Heart right ventricle (tissue), 16 donors: ENCODE measurements at regions of chr17 and their contacts with region 1.

Region 1: GRCh38 chr17:45218895-45219661 is 2.6 kb upstream of the FMNL1 start:
- DNase-seq: peak; percentile 86 to 87
- ATAC-seq: peak; percentile 55 to 87 (median 74)
- H3K4me3 ChIP-seq: no peak overlapping the region
- H3K27ac ChIP-seq: peak overlapping the region in 2 of 10 donors; percentile 6 to 34
- H3K4me1 ChIP-seq: peaks cover 2 to 40% (median 19%) of the 10 kb centered on the region in 9 donors
- H3K27me3 ChIP-seq: no peaks in the 10 kb centered on the region
- CTCF ChIP-seq: peak; percentile 90 to 97 (median 94)

Region 2: GRCh38 chr17:45115871-45116724 is 103.0 kb before region 1 on chr17:
- intact Hi-C with region 1: no loop called
- DNase-seq: no peak
- ATAC-seq: no peak
- H3K4me3 ChIP-seq: no peak overlapping the region
- H3K27ac ChIP-seq: no peak overlapping the region
- H3K4me1 ChIP-seq: peaks cover 0 to 14% (median 9%) of the 10 kb centered on the region in 9 donors
- H3K27me3 ChIP-seq: peaks cover 0 to 8% (median 0%) of the 10 kb centered on the region in 7 donors
- CTCF ChIP-seq: no peak

Region 3: DNA sequence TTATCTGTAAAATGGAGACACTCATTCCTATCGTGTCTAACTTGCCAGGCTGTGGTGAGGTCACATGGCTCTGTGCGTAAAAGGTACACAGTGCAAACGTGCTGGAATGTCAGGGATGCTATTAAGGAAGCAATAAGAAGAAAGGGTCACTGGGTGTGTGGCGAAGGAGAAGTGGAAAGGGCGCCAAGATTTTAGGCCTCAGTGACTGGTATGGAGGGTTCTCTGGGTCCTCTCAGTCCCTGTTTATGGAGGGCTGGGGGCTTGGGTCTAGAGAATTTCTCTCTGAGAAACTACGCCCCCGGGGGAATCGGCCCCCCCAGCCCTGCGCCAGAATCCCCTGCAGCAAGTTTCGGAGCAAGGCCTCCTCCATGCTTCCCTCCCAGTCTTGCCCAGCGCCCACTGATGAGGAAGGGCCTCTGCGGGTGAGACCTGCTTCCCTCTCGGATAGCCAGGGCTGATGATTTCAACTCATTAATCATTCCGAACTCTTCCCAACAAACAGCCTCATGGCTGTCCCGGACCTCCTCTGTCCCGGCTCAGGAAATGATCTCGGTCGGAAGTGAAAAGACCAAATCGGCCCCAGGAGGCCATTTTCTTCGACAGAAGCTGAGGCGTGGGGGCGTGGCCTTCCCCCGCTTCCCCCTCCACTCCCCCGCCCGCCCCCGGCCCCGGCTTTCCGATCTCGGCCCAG is 72.0 kb before region 1 on chr17:
- intact Hi-C with region 1: no loop called
- DNase-seq: peak; percentile 54 to 87
- ATAC-seq: peak; percentile 2 to 29 (median 10)
- H3K4me3 ChIP-seq: peak overlapping the region; percentile 60 to 97 (median 74)
- H3K27ac ChIP-seq: peak overlapping the region; percentile 92 to 99 (median 98)
- H3K4me1 ChIP-seq: peaks cover 13 to 55% (median 52%) of the 10 kb centered on the region in 9 donors
- H3K27me3 ChIP-seq: no peaks in the 10 kb centered on the region
- CTCF ChIP-seq: no peak

Region 4: DNA sequence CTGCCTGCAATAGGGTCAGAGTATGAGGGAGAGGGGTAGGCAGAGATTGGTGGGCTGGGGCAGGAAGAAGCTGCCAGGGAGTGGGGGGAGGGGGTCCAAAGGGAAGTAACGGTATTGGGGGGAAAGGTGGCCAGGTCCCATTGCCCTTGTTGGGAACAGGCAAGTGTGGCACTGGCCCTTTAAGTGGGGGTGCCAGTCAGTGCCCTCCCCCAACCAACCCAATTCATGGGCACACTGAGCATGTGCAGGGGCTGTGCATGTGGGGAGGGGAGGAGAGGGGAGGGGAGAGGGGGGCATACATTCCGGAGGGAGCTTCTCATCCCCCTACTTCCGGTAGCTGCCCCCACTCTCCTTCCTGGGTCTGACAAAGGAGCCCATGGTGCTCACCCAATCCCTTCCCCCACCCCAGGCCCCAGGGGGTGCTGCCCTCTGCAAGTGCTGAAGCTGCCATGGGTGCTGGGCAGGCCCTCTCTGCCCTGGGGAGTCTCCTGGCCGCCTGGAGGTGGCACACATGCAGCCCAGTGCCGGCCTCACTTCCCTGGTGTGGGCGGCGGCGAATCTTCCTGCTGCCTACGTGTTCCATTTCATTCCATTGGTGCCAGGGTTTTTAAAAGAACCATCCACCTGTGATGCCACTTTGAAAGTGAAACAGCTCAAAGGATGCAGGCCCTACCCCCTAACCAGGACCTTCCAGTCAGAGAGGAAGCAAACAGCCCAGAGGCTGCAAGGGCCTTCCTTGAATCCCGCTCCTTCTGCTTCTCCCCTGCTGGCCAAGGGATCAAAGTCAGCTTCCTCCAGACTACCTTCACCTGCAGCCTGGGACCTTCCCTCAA is 46.4 kb before region 1 on chr17:
- intact Hi-C with region 1: no loop called
- DNase-seq: peak; percentile 57 to 70
- ATAC-seq: peak; percentile 79 to 91 (median 86)
- H3K4me3 ChIP-seq: peak overlapping the region in 7 of 10 donors; percentile 19 to 47 (median 36)
- H3K27ac ChIP-seq: peak overlapping the region; percentile 70 to 94 (median 84)
- H3K4me1 ChIP-seq: peaks cover 15 to 40% (median 28%) of the 10 kb centered on the region in 9 donors
- H3K27me3 ChIP-seq: no peaks in the 10 kb centered on the region
- CTCF ChIP-seq: peak in 2 of 9 donors; percentile 9 to 22

Region 5: DNA sequence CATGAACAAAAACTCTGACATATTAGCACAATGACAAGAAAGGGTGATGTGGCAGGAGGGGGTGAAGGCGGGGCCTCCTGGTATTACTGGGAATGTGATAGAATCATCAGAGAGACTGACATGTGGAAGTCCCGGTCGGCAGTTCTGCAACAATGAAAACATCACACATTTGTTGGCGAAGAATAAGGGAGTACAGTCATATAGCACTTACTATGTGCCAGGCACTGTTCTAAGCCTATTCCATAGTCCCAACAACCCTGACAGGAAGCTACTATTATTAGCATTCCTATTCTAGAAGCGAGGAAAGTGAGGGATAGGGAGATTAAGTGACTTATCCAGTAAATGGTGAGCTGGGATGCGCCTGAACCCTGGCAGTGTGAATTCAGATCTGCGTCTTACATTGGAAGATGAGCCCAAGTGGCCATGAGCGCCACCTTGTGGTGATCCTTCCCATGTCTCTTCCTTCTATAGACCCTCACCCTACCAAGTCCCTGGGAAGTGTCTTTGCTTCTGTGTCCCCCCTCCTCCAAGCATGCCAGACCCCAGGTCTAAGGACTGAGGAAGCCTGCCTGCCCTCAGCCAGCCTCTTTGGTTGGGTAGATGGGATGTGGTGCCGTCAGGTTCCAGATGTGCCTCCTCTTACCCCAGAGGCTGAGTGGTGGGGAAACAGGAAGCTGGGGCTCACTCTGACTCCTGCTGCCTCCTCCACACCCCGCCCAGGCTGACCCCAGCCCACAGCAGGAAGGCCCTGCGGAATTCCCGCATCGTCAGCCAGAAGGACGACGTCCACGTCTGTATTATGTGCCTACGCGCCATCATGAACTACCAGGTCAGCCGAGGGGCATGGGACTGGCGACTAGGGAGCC is 16.6 kb after region 1 on chr17:
- intact Hi-C with region 1: loop called in 4 of 10 experiments (anchors 1 kb)
- DNase-seq: peak; percentile 70 to 74
- ATAC-seq: peak in 7 of 8 donors; percentile 32 to 64 (median 49)
- H3K4me3 ChIP-seq: no peak overlapping the region
- H3K27ac ChIP-seq: peak overlapping the region in 1 of 10 donors; percentile 52
- H3K4me1 ChIP-seq: peaks cover 0 to 39% (median 11%) of the 10 kb centered on the region in 9 donors
- H3K27me3 ChIP-seq: no peaks in the 10 kb centered on the region
- CTCF ChIP-seq: peak; percentile 60 to 88 (median 79)

Region 6: GRCh38 chr17:45270828-45271418 is 51.8 kb after region 1 on chr17:
- intact Hi-C with region 1: loop called in 6 of 10 experiments (anchors 5 to 10 kb)
- DNase-seq: no peak
- ATAC-seq: peak in 3 of 8 donors; percentile 24 to 38 (median 29)
- H3K4me3 ChIP-seq: no peak overlapping the region
- H3K27ac ChIP-seq: no peak overlapping the region
- H3K4me1 ChIP-seq: peaks cover 0 to 15% (median under 1%) of the 10 kb centered on the region in 9 donors
- H3K27me3 ChIP-seq: no peaks in the 10 kb centered on the region
- CTCF ChIP-seq: peak; percentile 20 to 66 (median 52)

Region 7: DNA sequence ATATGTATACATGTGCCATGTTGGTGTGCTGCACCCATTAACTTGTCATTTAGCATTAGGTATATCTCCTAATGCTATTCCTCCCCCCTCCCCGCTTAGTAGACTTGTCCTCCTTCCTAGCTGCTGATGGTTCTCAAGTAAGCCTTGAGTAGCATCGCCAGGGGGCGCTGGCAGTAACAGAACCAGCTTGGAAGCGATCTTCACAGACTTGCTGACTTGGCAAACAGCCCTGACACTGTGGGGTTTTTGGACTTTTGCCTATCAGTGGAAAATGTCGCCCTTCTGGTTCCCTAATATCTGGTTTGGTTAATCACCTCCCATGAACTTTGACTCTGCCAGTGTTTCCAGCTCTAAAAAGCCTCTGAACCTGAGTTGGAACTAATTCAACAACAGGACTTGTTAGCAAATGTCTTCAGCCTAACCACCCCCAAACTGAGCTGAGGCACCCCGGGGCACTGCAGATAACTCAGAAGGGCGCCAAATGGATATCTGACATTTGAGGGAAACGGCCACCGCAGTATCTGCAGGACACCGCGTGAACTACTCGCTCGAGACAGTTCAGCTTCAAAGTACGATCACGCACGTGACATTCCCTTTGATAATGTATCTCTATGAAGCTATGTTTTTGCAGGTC is 58.3 kb after region 1 on chr17:
- intact Hi-C with region 1: loop called in 6 of 10 experiments (anchors 5 to 10 kb)
- DNase-seq: peak; percentile 94
- ATAC-seq: peak; percentile 58 to 85 (median 74)
- H3K4me3 ChIP-seq: peak overlapping the region in 2 of 10 donors; percentile 2 to 5
- H3K27ac ChIP-seq: peak overlapping the region; percentile 27 to 90 (median 80)
- H3K4me1 ChIP-seq: peaks cover 12 to 53% (median 36%) of the 10 kb centered on the region in 9 donors
- H3K27me3 ChIP-seq: no peaks in the 10 kb centered on the region
- CTCF ChIP-seq: peak; percentile 69 to 88 (median 80)

Region 8: DNA sequence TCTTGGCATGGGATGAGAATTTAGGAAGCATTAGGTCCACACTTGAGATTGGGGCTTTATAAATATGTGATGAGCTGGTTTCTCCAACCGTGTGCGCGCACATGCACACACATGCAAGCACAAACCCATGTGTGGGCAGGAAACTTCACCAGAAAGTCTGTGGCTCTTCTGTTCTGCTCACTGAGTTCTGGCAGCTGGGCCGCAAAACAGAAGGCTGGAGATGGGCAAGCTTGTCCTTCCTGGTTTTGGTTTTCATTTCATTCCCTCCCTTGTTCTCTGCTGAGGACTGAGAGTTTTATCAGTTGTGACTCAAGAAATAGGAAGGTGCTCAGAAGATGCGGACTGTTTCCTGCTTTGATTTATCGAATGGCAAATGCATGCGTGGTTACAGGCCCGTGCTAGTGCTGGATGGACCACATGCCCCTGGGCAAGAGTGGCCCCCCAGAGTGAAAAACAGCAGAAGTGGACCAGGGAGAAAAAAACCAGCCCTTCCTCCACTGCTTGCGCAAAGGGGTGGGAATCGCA is 83.6 kb after region 1 on chr17:
- intact Hi-C with region 1: no loop called
- DNase-seq: no peak
- ATAC-seq: peak; percentile 35 to 76 (median 64)
- H3K4me3 ChIP-seq: no peak overlapping the region
- H3K27ac ChIP-seq: peak overlapping the region; percentile 46 to 84 (median 74)
- H3K4me1 ChIP-seq: peaks cover 40 to 98% (median 80%) of the 10 kb centered on the region in 9 donors
- H3K27me3 ChIP-seq: no peaks in the 10 kb centered on the region
- CTCF ChIP-seq: no peak

Region 9: GRCh38 chr17:45385331-45385997 is 166.4 kb after region 1 on chr17:
- intact Hi-C with region 1: loop called (anchors 1 to 5 kb)
- DNase-seq: peak; percentile 90 to 91
- ATAC-seq: peak; percentile 91 to 97 (median 95)
- H3K4me3 ChIP-seq: no peak overlapping the region
- H3K27ac ChIP-seq: peak overlapping the region in 1 of 10 donors; percentile 49
- H3K4me1 ChIP-seq: peaks cover 0 to 47% (median 20%) of the 10 kb centered on the region in 9 donors
- H3K27me3 ChIP-seq: peaks cover 0 to 8% (median 0%) of the 10 kb centered on the region in 7 donors
- CTCF ChIP-seq: peak; percentile 96 to 100 (median 98)

Region 10: DNA sequence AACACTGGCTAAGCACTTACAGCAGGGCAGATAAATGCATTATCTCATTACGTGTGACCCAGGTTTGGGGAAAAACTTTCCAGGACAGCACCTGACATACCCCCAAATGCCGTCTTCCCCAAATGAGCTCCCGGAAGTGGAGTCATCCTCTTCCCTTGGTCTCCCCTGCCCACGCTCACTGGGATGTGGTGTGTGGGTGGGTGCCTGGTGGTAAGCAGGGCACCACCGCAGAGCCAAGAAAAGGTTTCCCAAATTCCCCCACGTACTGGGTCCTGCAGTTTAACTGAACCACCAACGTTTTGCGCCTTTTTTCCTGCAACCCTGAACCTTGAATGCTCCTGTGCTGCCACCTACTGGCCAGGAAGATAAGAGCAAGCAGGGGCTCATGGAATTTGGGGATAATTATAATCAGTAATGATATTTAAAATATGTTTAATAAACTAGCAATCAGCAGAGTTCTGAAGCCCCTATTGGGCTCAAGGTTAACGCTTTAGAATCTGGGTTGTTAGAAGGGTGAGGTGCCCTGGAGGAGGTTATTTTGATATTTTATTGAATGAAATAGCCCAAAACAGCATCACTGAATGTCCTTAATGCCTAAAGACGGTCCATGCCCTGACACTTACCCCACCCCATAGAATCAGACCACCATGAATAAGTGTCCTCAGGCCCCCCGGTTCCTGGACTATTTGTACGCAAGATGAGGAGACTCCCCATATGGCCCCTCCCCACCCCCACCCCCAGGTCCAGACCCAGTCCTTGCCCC is 633.6 kb after region 1 on chr17:
- intact Hi-C with region 1: loop called in 1 of 10 experiments (anchors 10 kb)
- DNase-seq: peak in 1 of 2 donors; percentile 38
- ATAC-seq: no peak
- H3K4me3 ChIP-seq: no peak overlapping the region
- H3K27ac ChIP-seq: no peak overlapping the region
- H3K4me1 ChIP-seq: peaks cover 0 to 7% (median 0%) of the 10 kb centered on the region in 9 donors
- H3K27me3 ChIP-seq: peaks cover 0 to 37% (median 26%) of the 10 kb centered on the region in 7 donors
- CTCF ChIP-seq: peak; percentile 70 to 92 (median 87)